Body of pancreas (tissue), 4 donors: ENCODE measurements at regions of chr12 and their contacts with region 1.

Region 1: DNA sequence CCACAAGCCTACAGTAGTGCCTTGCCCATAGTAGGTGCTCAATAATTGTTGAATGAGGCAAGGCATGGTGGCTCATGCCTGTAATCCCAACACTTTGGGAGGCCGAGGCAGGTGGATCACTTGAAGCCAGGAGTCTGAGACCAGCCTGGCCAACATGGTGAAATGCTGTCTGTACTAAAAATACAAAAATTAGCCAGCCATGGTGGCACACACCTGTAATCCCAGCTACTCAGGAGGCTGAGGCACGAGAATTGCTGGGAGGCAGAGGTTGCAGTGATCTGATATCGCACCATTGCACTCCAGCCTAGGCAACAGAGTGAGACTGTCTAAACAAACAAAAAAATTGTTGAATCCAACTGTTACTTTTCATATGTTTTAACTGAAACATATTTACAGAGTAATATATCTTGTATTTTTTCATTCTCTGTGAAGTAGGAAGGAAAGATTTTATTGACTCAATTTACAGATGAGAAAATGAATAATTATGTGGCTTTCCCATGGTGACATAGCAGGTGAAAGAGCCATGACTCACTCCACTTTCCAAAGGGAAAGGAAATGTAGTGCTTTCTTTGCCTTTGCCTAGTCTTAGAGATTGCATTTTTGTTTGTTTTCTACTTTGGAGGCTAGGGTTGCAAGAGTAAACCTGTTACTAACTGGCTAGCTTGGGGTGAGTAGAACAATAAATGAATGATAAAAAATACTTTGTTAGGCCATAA is 95.4 kb upstream of the SLC38A4 start:
- DNase-seq: no peak
- ATAC-seq: no peak
- H3K4me3 ChIP-seq: no peak overlapping the region
- H3K27ac ChIP-seq: no peak overlapping the region
- H3K4me1 ChIP-seq: no peaks in the 10 kb centered on the region
- H3K27me3 ChIP-seq: no peaks in the 10 kb centered on the region
- CTCF ChIP-seq: no peak
- POLR2A ChIP-seq: no peak

Region 2: GRCh38 chr12:46686267-46686942 is 234.8 kb before region 1 on chr12:
- intact Hi-C with region 1: loop called (anchors 10 kb)
- DNase-seq: no peak
- ATAC-seq: no peak
- H3K4me3 ChIP-seq: no peak overlapping the region
- H3K27ac ChIP-seq: no peak overlapping the region
- H3K4me1 ChIP-seq: no peaks in the 10 kb centered on the region
- H3K27me3 ChIP-seq: no peaks in the 10 kb centered on the region
- CTCF ChIP-seq: no peak
- POLR2A ChIP-seq: no peak

Region 3: DNA sequence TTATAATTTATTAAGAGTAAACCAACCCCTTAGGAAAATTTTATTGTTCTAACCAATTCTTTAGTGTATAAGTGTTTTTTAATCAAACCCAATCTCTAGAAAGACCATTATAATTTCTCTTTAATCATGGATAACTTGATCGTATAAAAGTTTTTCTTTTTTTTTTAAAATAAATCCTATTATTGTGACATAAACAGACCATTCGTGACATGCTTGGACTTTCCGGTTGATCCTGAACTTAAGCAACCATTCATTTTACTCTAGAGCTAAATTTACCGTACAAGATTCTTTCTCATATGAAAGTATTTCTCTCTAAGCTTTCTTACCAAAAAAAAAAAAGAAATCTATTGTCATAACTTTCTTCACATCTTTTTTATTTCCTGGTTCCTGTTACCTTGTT is 62.8 kb before region 1 on chr12:
- intact Hi-C with region 1: no loop called
- DNase-seq: no peak
- ATAC-seq: no peak
- H3K4me3 ChIP-seq: no peak overlapping the region
- H3K27ac ChIP-seq: no peak overlapping the region
- H3K4me1 ChIP-seq: no peaks in the 10 kb centered on the region
- H3K27me3 ChIP-seq: no peaks in the 10 kb centered on the region
- CTCF ChIP-seq: no peak
- POLR2A ChIP-seq: no peak

Region 4: DNA sequence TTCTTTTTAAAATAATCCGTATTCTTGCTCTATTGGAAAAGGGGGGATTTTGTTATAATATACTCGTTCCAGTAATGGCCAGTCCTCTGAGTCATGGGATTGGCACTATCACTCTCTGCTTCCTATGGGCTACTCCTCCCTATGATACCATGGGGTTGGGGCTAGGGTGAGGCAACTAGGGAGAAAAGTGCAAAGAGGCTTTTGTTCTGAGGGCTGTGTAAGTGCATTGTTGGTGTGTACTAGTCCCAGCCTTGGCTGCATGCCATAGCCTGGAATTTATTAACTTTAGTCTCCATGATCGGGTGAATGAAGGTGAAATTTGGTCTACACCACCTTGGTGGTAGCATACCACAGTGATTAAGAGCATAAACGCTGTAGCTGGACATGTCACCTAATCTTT is 537.1 kb after region 1 on chr12:
- intact Hi-C with region 1: no loop called
- DNase-seq: peak; percentile 13 to 42 (median 24)
- ATAC-seq: peak; percentile 69
- H3K4me3 ChIP-seq: no peak overlapping the region
- H3K27ac ChIP-seq: no peak overlapping the region
- H3K4me1 ChIP-seq: no peaks in the 10 kb centered on the region
- H3K27me3 ChIP-seq: no peaks in the 10 kb centered on the region
- CTCF ChIP-seq: no peak
- POLR2A ChIP-seq: no peak

Region 5: GRCh38 chr12:48651681-48652080 is 1730.5 kb after region 1 on chr12:
- intact Hi-C with region 1: no loop called
- DNase-seq: no peak
- ATAC-seq: no peak
- H3K4me3 ChIP-seq: no peak overlapping the region
- H3K27ac ChIP-seq: no peak overlapping the region
- H3K4me1 ChIP-seq: no peaks in the 10 kb centered on the region
- H3K27me3 ChIP-seq: no peaks in the 10 kb centered on the region
- CTCF ChIP-seq: no peak
- POLR2A ChIP-seq: no peak